Posterior vena cava (tissue), 2 donors: ENCODE measurements at regions of chr7 and their contacts with region 1.

Region 1: GRCh38 chr7:98434095-98434494 is 33.2 kb upstream of the BAIAP2L1 start:
- DNase-seq: no peak

Region 2: GRCh38 chr7:98483276-98483965 is 49.3 kb after region 1 on chr7:
- intact Hi-C with region 1: no loop called
- DNase-seq: peak; percentile 4

Region 3: DNA sequence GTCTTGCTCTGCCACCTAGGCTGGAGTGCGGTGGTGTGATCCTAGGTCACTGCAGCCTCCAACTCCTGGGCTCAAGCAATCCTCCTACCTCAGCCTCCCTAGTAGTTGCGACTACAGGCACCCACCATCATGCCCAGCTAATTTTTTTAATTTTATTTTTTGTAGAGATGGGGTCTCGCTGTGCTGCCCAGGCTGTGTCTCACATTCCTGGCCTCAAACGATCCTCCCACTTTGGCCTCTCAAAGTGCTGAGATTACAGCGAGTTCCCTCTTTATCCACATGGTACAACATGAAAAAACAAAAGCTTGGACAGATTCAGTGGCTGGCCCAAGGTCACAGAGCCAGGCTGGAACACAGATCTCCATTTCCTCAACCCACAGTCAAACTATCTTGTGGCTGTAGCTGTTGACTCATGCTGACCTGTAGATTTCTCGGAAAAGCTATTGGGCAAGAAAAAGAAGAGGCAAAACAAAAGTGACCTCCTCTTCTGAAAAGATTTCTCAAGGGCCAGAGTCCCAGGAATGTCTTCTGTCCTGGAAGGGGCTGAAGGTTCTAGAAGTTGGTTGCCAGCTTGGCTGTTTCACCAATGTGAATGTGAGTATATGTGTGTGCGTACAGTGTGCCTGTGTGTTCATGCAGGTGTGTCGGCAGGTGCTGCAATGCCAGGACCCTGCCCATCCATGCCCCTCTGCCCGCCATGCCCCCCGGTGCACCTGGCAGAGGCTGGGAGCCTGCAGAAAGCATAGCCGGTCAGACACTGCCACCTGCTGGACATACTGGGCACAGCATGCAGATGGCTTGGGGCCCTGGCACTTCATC is 407.3 kb after region 1 on chr7:
- intact Hi-C with region 1: loop called in 1 of 2 experiments (anchors 5 kb)
- DNase-seq: peak; percentile 89